Aorta (tissue), 5 donors: ENCODE measurements at regions of chr4 and their contacts with region 1.

Region 1: GRCh38 chr4:931960-932712 is at the starts of genes GAK and TMEM175:
- DNase-seq: peak; percentile 97 to 99
- ATAC-seq: peak; percentile 99
- H3K4me3 ChIP-seq: peak within 1 kb of the TSS; percentile 57 to 82
- H3K27ac ChIP-seq: peak within 1 kb of the TSS in 1 of 2 donors; percentile 43
- H3K4me1 ChIP-seq: no peaks in the 10 kb centered on the region
- H3K27me3 ChIP-seq: no peaks in the 10 kb centered on the region
- total RNA-seq, gene GAK: 90.8 to 98.0 TPM
- total RNA-seq, gene TMEM175: 17.4 to 26.0 TPM

Region 2: DNA sequence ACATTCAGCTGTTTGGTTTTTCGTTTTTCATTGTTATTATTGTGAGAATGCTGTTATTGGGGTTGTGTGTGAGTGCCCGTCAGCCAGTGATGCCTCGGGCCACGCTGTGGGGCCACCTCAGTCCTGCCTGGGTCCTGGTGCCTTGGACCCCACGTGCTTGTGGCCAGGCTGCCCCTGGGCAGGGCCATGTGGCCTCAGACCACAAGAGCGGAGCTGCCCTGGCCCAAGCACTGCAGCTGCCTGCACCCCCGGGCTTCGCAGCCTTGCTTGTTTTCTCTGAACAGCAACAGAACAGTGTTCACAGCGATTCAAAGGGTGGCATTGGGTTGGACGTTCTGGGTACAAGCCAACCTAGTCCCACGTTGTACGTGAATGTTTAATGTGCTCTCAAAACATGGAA is 163.1 kb before region 1 on chr4:
- intact Hi-C with region 1: no loop called
- DNase-seq: peak in 1 of 2 donors; percentile 73
- ATAC-seq: no peak
- H3K4me3 ChIP-seq: no peak overlapping the region
- H3K27ac ChIP-seq: no peak overlapping the region
- H3K4me1 ChIP-seq: no peaks in the 10 kb centered on the region
- H3K27me3 ChIP-seq: no peaks in the 10 kb centered on the region

Region 3: GRCh38 chr4:973431-974397 is 41.6 kb after region 1 on chr4 and contains the start of gene DGKQ:
- intact Hi-C with region 1: loop called in 1 of 2 experiments (anchors 5 kb)
- DNase-seq: peak; percentile 90 to 97
- ATAC-seq: peak; percentile 97
- H3K4me3 ChIP-seq: peak within 1 kb of the TSS; percentile 70 to 90
- H3K27ac ChIP-seq: no peak within 1 kb of the TSS
- H3K4me1 ChIP-seq: no peaks in the 10 kb centered on the region
- H3K27me3 ChIP-seq: no peaks in the 10 kb centered on the region
- total RNA-seq, gene DGKQ: 11.2 to 14.2 TPM

Region 4: DNA sequence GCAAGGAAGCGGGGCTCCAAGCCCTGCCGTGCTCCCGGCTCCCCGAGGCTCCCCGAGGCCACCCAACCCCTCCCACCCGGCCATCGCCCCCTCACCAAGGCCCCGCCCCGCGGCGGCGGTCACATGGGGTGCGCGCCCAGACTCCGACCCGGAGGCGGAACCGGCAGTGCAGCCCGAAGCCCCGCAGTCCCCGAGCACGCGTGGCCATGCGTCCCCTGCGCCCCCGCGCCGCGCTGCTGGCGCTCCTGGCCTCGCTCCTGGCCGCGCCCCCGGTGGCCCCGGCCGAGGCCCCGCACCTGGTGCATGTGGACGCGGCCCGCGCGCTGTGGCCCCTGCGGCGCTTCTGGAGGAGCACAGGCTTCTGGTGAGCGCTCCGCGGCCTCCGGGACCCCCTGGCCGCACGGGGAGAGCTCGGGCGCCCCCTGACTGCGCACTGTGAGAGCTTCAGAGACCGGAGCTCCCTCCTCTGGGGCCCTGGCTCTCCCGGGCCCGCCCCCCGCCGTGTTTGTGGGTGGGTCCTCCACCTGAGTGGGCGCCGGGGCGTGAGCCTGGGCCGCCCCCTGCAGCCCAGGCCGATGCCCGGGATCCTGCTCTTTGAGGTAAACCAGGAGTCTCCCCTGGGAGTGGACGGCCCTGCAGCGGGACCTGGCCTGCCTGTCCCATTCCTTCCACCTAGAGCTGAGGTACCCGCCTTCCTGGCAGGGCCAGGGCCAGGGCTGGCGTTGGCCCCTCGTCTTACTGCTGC is 54.9 kb after region 1 on chr4 and contains the start of gene IDUA:
- intact Hi-C with region 1: loop called in 1 of 2 experiments (anchors 5 kb)
- DNase-seq: peak; percentile 91 to 93
- ATAC-seq: peak; percentile 90
- H3K4me3 ChIP-seq: peak within 1 kb of the TSS; percentile 38 to 58
- H3K27ac ChIP-seq: no peak within 1 kb of the TSS
- H3K4me1 ChIP-seq: no peaks in the 10 kb centered on the region
- H3K27me3 ChIP-seq: no peaks in the 10 kb centered on the region
- total RNA-seq, gene IDUA: 27.5 to 44.2 TPM

Region 5: GRCh38 chr4:1137063-1137776 is 205.1 kb after region 1 on chr4:
- intact Hi-C with region 1: no loop called
- DNase-seq: no peak
- ATAC-seq: no peak
- H3K4me3 ChIP-seq: no peak overlapping the region
- H3K27ac ChIP-seq: no peak overlapping the region
- H3K4me1 ChIP-seq: no peaks in the 10 kb centered on the region
- H3K27me3 ChIP-seq: no peaks in the 10 kb centered on the region

Region 6: DNA sequence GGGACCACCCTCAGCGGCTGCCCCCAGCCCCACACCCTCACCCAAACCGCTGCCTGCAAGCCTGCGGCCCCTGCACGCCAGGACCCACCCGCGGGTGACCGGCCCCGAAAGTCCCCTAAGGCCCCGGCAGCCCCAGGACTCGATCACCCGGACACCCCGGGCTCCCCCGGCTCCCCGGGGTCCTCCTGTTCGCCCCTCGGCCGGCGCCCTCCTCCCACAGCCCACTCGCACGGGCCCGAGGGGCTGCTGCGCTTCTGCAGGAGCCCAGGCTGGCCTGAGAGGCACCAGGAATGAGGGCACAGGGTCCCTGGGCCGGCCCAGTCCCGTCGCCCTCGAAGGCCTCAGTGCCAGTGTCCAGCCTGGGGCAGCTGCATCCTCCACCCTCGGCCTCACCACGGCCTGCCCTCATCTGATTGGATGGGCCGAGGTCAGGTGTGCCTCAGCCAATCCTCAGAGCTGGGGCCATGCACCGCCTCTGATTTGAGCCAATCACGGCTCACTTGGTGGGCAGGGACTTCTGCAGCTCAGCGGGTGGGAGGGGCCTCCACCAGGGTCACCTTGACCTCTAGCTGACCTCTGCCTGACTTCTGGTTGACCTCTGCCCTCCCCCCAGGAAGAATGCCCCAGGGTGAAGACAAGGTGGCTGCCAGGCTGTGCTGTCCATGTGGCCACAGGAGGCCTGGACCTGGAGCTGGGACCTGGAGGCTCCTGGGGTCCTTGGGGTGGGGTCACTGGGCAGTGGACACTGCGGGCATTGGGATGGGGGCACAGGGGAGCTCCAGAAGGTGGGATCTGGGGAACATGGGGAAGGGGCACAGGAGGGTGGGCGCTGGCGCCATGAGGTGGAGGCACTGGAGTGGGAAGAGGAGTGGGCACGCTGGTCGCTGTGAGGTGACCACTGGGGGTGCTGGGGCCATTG is 571.7 kb after region 1 on chr4:
- intact Hi-C with region 1: no loop called
- DNase-seq: peak in 1 of 2 donors; percentile 68
- ATAC-seq: no peak
- H3K4me3 ChIP-seq: no peak overlapping the region
- H3K27ac ChIP-seq: no peak overlapping the region
- H3K4me1 ChIP-seq: no peaks in the 10 kb centered on the region
- H3K27me3 ChIP-seq: no peaks in the 10 kb centered on the region